CD8-positive, alpha-beta T cell (primary cell): ENCODE measurements at regions of chr12 and their contacts with region 1.

Region 1: GRCh38 chr12:31274520-31275300 is 51.2 kb downstream of the SINHCAF start:
- DNase-seq: no peak
- ATAC-seq: no peak
- H3K4me3 ChIP-seq: no peak overlapping the region
- H3K4me3 Mint-ChIP-seq: no peak overlapping the region
- H3K27ac ChIP-seq: no peak overlapping the region
- H3K27ac Mint-ChIP-seq: peak overlapping the region; percentile 20
- H3K4me1 ChIP-seq: no peaks in the 10 kb centered on the region
- H3K4me1 Mint-ChIP-seq: peaks cover 3% of the 10 kb centered on the region
- H3K27me3 ChIP-seq: no peaks in the 10 kb centered on the region
- H3K27me3 Mint-ChIP-seq: no peaks in the 10 kb centered on the region
- CTCF ChIP-seq: no peak

Region 2: GRCh38 chr12:31117203-31118011 is 157.3 kb before region 1 on chr12:
- CTCF ChIA-PET with region 1: interaction called, 4 read pairs
- POLR2A ChIA-PET with region 1: interaction called, 4 read pairs
- intact Hi-C with region 1: loop called in 1 of 2 experiments (anchors 1 kb)
- DNase-seq: peak; percentile 39 to 79 (median 68)
- ATAC-seq: peak; percentile 83
- H3K4me3 ChIP-seq: peak overlapping the region; percentile 52
- H3K4me3 Mint-ChIP-seq: peak overlapping the region; percentile 81
- H3K27ac ChIP-seq: no peak overlapping the region
- H3K27ac Mint-ChIP-seq: no peak overlapping the region
- H3K4me1 ChIP-seq: peaks cover 16% of the 10 kb centered on the region
- H3K4me1 Mint-ChIP-seq: peaks cover 4% of the 10 kb centered on the region
- H3K27me3 ChIP-seq: peaks cover 0 to 29% of the 10 kb centered on the region in 2 experiments
- H3K27me3 Mint-ChIP-seq: no peaks in the 10 kb centered on the region
- CTCF ChIP-seq: peak; percentile 57

Region 3: DNA sequence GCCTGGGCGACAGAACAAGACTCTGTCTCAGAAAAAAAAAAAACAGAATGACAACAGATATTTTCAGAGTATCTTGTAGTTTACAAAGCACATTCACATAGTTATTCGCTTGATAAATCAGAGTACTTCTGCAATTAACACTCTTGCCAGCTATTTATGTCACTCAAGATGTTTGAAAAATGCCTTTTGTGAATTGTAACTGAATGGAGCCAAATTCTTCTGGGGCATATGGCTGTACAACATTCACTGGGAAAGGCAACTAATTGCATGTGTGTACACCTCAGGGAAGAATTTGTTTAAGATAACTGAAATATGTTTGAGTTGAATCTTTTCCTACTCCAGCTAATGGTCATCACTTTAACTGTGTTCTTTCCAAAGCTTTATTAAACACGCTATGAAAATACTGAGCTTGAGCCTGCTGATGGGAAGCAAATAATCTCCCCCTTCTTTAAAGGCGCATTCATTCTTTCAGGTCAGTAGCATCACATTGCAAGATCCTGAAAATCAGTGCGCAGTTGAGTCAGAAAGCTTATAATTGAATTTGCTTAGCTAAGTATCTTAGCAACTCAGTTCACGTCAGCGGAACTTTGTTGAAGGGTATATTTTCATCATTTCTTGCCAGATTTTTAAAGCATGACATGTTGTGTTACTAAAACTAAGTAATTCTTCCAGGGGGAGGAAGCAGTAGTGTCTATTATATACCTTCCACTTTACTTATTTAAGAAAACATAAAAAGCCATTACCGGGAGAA is 15.4 kb before region 1 on chr12:
- CTCF ChIA-PET with region 1: interaction called, 22 read pairs
- POLR2A ChIA-PET with region 1: interaction called, 6 read pairs
- intact Hi-C with region 1: no loop called
- DNase-seq: no peak
- ATAC-seq: no peak
- H3K4me3 ChIP-seq: no peak overlapping the region
- H3K4me3 Mint-ChIP-seq: no peak overlapping the region
- H3K27ac ChIP-seq: no peak overlapping the region
- H3K27ac Mint-ChIP-seq: no peak overlapping the region
- H3K4me1 ChIP-seq: no peaks in the 10 kb centered on the region
- H3K4me1 Mint-ChIP-seq: no peaks in the 10 kb centered on the region
- H3K27me3 ChIP-seq: no peaks in the 10 kb centered on the region
- H3K27me3 Mint-ChIP-seq: no peaks in the 10 kb centered on the region
- CTCF ChIP-seq: no peak

Region 4: GRCh38 chr12:31297572-31298512 is 23.1 kb after region 1 on chr12:
- CTCF ChIA-PET with region 1: interaction called, 16 read pairs
- POLR2A ChIA-PET with region 1: no interaction called
- intact Hi-C with region 1: no loop called
- DNase-seq: no peak
- ATAC-seq: no peak
- H3K4me3 ChIP-seq: no peak overlapping the region
- H3K4me3 Mint-ChIP-seq: no peak overlapping the region
- H3K27ac ChIP-seq: no peak overlapping the region
- H3K27ac Mint-ChIP-seq: peak overlapping the region; percentile 82
- H3K4me1 ChIP-seq: peaks cover 9% of the 10 kb centered on the region
- H3K4me1 Mint-ChIP-seq: peaks cover 34% of the 10 kb centered on the region
- H3K27me3 ChIP-seq: no peaks in the 10 kb centered on the region
- H3K27me3 Mint-ChIP-seq: no peaks in the 10 kb centered on the region
- CTCF ChIP-seq: no peak

Region 5: DNA sequence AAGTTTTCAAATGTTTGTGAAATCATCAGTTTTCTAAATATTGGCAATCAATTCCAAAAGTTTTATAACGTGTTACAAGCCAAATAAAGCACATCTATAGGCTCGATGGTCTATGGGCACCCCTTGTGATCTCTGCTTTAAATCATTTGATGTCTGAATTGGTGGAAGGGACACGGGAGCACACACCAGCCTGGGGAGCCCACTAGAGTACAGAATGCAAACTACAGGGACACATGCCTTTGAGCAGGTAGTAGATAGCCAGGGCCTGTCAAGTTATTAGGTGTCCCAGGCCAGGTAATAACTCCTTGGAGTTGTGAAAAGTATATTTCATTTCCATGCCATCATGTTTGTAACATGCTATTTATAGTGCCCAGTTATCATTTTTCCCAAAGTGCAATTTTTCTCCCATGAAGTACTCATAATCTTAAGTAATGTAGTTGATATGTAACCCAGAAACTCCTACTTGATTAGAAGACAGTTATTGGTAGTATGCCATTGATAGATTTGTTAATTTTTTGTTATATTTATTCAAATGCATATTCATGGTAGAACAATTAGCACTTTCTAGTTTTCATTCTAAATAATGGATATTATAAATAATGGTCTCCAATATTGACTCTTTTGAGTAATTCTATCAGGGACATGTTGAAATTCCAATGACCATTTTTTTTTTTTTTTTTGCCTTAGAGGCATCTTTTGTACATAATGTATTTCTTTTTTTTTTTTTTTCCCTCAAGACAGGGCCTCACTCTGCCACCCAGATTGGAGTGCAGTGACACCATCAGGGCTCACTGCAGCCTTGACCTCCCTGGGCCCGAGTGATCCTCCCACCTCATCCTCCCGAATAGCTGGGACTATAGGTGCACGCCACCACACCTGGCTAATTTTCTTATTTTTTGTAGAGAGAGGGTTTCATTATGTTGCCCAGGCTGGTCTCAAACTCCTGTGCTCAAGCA is 1027.8 kb after region 1 on chr12:
- CTCF ChIA-PET with region 1: no interaction called
- POLR2A ChIA-PET with region 1: no interaction called
- intact Hi-C with region 1: loop called in 1 of 2 experiments (anchors 10 kb)
- DNase-seq: peak in 1 of 9 experiments; percentile 35
- ATAC-seq: no peak
- H3K4me3 ChIP-seq: no peak overlapping the region
- H3K4me3 Mint-ChIP-seq: no peak overlapping the region
- H3K27ac ChIP-seq: no peak overlapping the region
- H3K27ac Mint-ChIP-seq: no peak overlapping the region
- H3K4me1 ChIP-seq: no peaks in the 10 kb centered on the region
- H3K4me1 Mint-ChIP-seq: peaks cover 5% of the 10 kb centered on the region
- H3K27me3 ChIP-seq: no peaks in the 10 kb centered on the region
- H3K27me3 Mint-ChIP-seq: no peaks in the 10 kb centered on the region
- CTCF ChIP-seq: peak; percentile 21